A549 (cell line): ENCODE measurements at regions of chr5 and their contacts with region 1.

Region 1: DNA sequence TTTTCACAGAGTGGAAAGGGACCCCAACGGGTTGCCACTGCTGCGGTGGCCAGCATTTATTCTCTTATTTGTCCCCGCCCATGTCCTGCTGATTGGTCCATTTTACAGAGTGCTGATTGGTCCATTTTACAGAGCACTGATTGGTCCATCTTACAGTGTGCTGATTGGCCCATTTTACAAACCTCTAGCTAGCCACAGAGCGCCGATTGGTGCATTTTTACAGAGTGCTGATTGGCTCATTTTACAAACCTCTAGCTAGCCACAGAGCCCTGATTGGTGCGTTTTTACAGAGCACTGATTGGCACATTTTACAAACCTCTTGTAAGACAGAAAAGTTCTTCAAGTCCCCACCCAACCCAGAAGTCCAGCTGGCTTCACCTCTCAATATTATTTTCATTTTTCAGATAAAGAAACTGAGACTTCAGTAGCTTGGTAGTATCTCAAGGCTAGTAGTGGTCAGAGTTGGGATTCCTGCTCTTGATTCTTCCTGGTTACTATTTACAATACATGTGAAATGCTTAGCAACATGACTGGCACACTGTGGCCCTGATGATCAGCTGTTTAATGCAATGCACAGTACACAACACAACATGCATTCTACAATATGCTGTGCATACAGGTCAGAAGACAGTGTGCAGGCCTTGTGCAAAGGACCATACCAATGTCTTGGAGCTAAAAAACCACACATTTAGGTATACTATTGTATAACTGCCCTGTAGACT is 63.6 kb upstream of the BOD1 start:
- DNase-seq: no peak
- ATAC-seq: no peak
- H3K4me3 ChIP-seq: no peak overlapping the region
- H3K27ac ChIP-seq: no peak overlapping the region
- H3K4me1 ChIP-seq: no peaks in the 10 kb centered on the region
- CTCF ChIP-seq: no peak
- EP300 ChIP-seq: no peak
- POLR2A ChIP-seq: no peak
- RAD21 ChIP-seq: no peak

Region 2: DNA sequence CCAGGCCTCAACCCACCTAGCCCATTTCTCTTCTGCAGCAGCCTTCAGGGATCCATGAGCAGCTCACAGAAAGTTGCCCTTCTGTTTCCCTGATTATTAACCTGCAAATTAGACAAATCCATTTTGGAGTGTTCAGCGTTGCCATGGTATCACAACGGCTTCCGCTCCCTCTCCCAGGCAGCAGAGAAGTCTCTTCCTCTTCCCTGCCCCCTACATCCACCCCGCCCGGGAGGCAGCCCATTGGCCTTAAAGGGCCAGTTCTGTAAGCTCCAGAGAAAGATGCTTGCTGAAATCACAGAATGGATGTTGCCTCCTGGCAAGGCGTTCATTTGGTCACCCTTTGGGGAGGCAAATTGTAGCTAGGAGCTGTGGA is 15.9 kb before region 1 on chr5:
- CTCF ChIA-PET with region 1: interaction called, 4 read pairs
- POLR2A ChIA-PET with region 1: interaction called, 16 read pairs
- DNase-seq: peak in 1 of 2 experiments; percentile 21
- ATAC-seq: peak in 1 of 2 experiments; percentile 72; a peak in 3 of 6 replicates
- H3K4me3 ChIP-seq: no peak overlapping the region
- H3K27ac ChIP-seq: 0 out of 6 replicates have a peak overlapping the region, but pooled peaks of 1 of the 2 experiments have one; percentile 5
- H3K4me1 ChIP-seq: peaks cover 3% of the 10 kb centered on the region; the same call in 1 of the 3 replicates
- CTCF ChIP-seq: no peak
- EP300 ChIP-seq: no peak
- POLR2A ChIP-seq: no peak
- RAD21 ChIP-seq: no peak